Naive thymus-derived CD4-positive, alpha-beta T cell (primary cell): ENCODE measurements at regions of chr1 and their contacts with region 1.

Region 1: GRCh38 chr1:15835741-15836510 is 11.6 kb upstream of the SPEN start:
- DNase-seq: peak; percentile 96 to 99 (median 98)
- ATAC-seq: peak; percentile 77
- H3K4me3 ChIP-seq: peak overlapping the region; percentile 100
- H3K4me3 Mint-ChIP-seq: peak overlapping the region; percentile 88 to 100 (median 96)
- H3K27ac ChIP-seq: peak overlapping the region; percentile 98
- H3K27ac Mint-ChIP-seq: peak overlapping the region; percentile 98 to 100 (median 99)
- H3K4me1 ChIP-seq: peaks cover 12 to 16% of the 10 kb centered on the region in 2 donors
- H3K4me1 Mint-ChIP-seq: peaks cover 5 to 35% (median 24%) of the 10 kb centered on the region in 7 donors
- H3K27me3 ChIP-seq: no peaks in the 10 kb centered on the region
- H3K27me3 Mint-ChIP-seq: peaks cover 0 to 3% (median 0%) of the 10 kb centered on the region in 5 donors

Region 2: GRCh38 chr1:15617175-15617880 is 218.6 kb before region 1 on chr1 and contains the start of gene DDI2:
- CTCF ChIA-PET with region 1: no interaction called
- POLR2A ChIA-PET with region 1: no interaction called
- intact Hi-C with region 1: loop called (anchors 1 to 5 kb)
- DNase-seq: peak; percentile 86 to 97 (median 88)
- ATAC-seq: peak; percentile 94
- H3K4me3 ChIP-seq: peak within 1 kb of the TSS; percentile 96
- H3K4me3 Mint-ChIP-seq: peak within 1 kb of the TSS; percentile 83 to 96 (median 94)
- H3K27ac ChIP-seq: peak within 1 kb of the TSS; percentile 88
- H3K27ac Mint-ChIP-seq: peak within 1 kb of the TSS; percentile 84 to 96 (median 92)
- H3K4me1 ChIP-seq: peaks cover 20 to 30% of the 10 kb centered on the region in 2 donors
- H3K4me1 Mint-ChIP-seq: peaks cover 29 to 51% (median 43%) of the 10 kb centered on the region in 7 donors
- H3K27me3 ChIP-seq: no peaks in the 10 kb centered on the region
- H3K27me3 Mint-ChIP-seq: no peaks in the 10 kb centered on the region
- total RNA-seq, gene DDI2: 24.5 to 46.8 (median 37.0) TPM

Region 3: DNA sequence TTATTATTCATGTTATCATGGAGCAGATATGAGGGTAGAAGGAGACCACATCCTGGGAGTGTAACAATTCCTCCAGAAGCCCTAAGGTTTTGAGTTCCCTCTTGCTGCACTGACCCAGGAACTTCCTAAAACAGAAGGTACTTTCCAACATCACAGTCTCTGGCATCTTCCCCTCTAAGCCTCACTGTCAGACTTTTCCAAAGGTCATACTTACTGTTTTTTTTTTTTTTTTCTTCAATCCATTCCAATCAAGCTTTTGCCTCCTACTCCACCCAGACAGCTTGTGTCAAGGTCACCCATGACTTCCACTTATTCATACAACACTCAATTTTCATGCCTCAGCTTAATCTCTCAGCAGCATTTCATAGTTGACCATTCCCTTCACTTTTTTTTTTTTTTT is 10.1 kb before region 1 on chr1:
- CTCF ChIA-PET with region 1: interaction called, 5 read pairs
- POLR2A ChIA-PET with region 1: interaction called, 39 read pairs
- intact Hi-C with region 1: no loop called
- DNase-seq: no peak
- ATAC-seq: peak; percentile 60
- H3K4me3 ChIP-seq: no peak overlapping the region
- H3K4me3 Mint-ChIP-seq: no peak overlapping the region
- H3K27ac ChIP-seq: no peak overlapping the region
- H3K27ac Mint-ChIP-seq: no peak overlapping the region
- H3K4me1 ChIP-seq: no peaks in the 10 kb centered on the region
- H3K4me1 Mint-ChIP-seq: peaks cover 9 to 23% (median 15%) of the 10 kb centered on the region in 7 donors
- H3K27me3 ChIP-seq: no peaks in the 10 kb centered on the region
- H3K27me3 Mint-ChIP-seq: no peaks in the 10 kb centered on the region

Region 4: GRCh38 chr1:15918962-15919715 is 83.2 kb after region 1 on chr1:
- CTCF ChIA-PET with region 1: no interaction called
- POLR2A ChIA-PET with region 1: interaction called, 4 read pairs
- intact Hi-C with region 1: loop called in 1 of 2 experiments (anchors 5 kb)
- DNase-seq: peak in 1 of 9 donors; percentile 74
- ATAC-seq: peak; percentile 68
- H3K4me3 ChIP-seq: no peak overlapping the region
- H3K4me3 Mint-ChIP-seq: peak overlapping the region in 4 of 10 donors; percentile 8 to 76 (median 20)
- H3K27ac ChIP-seq: no peak overlapping the region
- H3K27ac Mint-ChIP-seq: peak overlapping the region in 7 of 9 donors; percentile 16 to 77 (median 33)
- H3K4me1 ChIP-seq: peaks cover 10 to 22% of the 10 kb centered on the region in 2 donors
- H3K4me1 Mint-ChIP-seq: peaks cover 9 to 40% (median 31%) of the 10 kb centered on the region in 7 donors
- H3K27me3 ChIP-seq: no peaks in the 10 kb centered on the region
- H3K27me3 Mint-ChIP-seq: no peaks in the 10 kb centered on the region

Region 5: DNA sequence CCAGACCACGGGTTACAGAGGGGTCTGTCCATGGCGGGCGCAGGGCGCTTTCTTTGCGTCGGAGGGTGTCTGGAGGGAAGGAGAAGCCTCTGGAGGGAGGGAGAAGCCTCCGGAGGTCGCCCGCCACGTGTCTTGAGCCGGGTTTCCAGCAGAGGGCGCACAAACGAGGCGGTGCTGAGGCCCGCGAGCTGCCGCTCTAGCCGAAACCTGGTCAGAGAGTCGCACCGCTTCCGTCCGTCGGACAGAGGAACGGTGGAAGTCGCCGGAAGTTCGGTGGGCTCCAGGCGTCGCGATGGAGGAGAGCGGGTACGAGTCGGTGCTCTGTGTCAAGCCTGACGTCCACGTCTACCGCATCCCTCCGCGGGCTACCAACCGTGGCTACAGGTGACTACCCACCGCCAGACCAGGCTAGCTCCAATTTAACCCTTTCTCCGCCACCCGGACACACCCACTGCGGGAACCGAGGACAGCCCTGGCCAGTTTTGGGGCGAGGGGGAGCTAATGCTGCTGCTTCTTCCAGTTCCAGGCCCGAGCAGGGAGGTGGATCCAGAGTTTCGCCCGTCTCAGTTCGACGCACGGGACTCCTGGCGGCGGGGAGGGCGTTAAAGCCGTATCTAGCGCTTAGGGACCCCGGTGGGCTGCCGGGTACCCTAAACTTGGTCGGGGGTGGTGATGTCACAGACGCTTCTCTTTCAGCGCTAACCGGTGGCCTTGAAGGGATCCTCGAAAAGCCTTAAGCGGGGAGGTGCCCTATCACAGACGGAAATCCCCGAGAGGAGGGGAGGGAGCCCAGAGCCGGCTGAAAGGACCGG is 604.8 kb after region 1 on chr1 and contains the start of gene NECAP2:
- CTCF ChIA-PET with region 1: no interaction called
- POLR2A ChIA-PET with region 1: no interaction called
- intact Hi-C with region 1: loop called in 1 of 2 experiments (anchors 2 kb)
- DNase-seq: peak; percentile 79 to 95 (median 88)
- ATAC-seq: peak; percentile 95
- H3K4me3 ChIP-seq: peak within 1 kb of the TSS; percentile 94
- H3K4me3 Mint-ChIP-seq: peak within 1 kb of the TSS; percentile 93 to 100 (median 97)
- H3K27ac ChIP-seq: peak within 1 kb of the TSS; percentile 100
- H3K27ac Mint-ChIP-seq: peak within 1 kb of the TSS; percentile 88 to 98 (median 96)
- H3K4me1 ChIP-seq: peaks cover 17 to 33% of the 10 kb centered on the region in 2 donors
- H3K4me1 Mint-ChIP-seq: peaks cover 19 to 45% (median 34%) of the 10 kb centered on the region in 7 donors
- H3K27me3 ChIP-seq: no peaks in the 10 kb centered on the region
- H3K27me3 Mint-ChIP-seq: no peaks in the 10 kb centered on the region
- total RNA-seq, gene NECAP2: 98.2 to 161 (median 148) TPM

Region 6: DNA sequence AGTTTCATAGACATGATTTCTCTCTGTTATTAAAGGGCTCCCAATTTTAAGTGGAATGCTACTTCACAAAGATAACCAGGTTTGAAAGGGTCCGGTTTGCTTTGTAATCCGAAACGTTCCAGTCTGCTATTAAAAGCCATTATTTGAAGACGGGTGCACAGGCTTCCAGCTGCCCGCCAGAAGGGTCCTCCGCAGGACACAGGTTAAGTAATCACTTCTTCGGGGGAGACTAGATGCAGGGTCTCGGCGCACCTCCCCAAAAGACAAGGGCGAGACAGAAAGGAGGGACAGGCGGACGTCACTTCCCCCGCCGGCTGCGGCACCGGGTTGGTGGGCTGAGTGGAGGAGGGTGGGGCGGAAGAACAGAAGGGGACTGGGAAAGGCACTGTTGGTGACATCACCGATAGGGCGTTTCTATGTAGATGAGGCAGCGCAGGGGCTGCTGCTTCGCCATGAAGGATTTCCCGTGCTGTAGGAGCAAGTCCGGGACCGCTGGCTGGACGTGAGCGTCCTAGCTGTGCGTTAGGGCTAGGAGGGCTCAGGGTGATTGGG is 1068.7 kb after region 1 on chr1:
- CTCF ChIA-PET with region 1: no interaction called
- POLR2A ChIA-PET with region 1: interaction called, 5 read pairs
- intact Hi-C with region 1: loop called (anchors 2 to 10 kb)
- DNase-seq: peak; percentile 97 to 100 (median 99)
- ATAC-seq: peak; percentile 95
- H3K4me3 ChIP-seq: peak overlapping the region; percentile 69
- H3K4me3 Mint-ChIP-seq: no peak overlapping the region
- H3K27ac ChIP-seq: peak overlapping the region; percentile 98
- H3K27ac Mint-ChIP-seq: no peak overlapping the region
- H3K4me1 ChIP-seq: peaks cover 11 to 25% of the 10 kb centered on the region in 2 donors
- H3K4me1 Mint-ChIP-seq: peaks cover 26 to 51% (median 38%) of the 10 kb centered on the region in 7 donors
- H3K27me3 ChIP-seq: no peaks in the 10 kb centered on the region
- H3K27me3 Mint-ChIP-seq: peaks cover 0 to 4% (median 0%) of the 10 kb centered on the region in 5 donors